Calu3 (cell line): ENCODE measurements at regions of chr6 and their contacts with region 1.

Region 1: DNA sequence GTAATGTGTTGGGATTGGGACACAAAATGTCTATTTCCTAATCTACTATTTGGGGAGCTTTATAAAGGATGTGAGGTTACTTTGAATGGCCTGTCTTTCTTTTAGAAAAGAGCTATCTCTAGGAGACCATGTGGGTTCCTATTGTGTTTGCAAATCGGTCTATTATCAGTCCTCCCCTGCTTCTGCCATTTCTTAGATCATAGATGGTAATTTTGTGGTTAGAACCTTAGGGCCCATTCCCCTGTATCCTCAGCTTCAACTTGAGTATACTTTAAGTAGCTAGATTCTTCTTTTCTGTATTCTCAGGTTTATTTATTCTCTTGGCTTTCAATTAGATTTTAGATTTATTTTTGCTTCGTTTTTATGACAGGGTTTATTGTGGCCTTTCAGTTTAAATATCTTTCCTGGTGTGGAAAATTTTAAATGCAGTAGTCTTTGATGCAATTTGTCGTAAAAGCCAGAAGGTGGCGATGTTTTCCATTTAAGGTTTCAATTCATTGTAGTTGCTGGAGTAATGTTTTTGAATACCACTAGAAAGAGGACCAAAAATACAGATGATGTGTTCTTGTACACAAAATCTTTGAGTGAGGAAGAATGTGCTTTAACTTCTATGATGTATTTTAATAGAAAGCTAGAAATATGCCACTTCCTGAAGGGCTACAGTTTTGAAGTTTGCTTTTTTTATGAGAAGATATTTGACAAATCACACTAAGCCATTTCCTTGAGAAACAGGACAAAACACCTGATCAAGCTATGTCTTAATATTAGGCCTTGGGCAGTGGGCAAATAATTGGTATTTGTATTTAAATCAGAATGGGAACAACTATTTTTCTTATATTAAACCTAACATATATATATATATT is 20.3 kb downstream of the TBPL1 start:
- DNase-seq: no peak
- H3K4me3 Mint-ChIP-seq: no peak overlapping the region
- H3K27ac Mint-ChIP-seq: peak overlapping the region; percentile 44
- H3K4me1 Mint-ChIP-seq: peaks cover 44% of the 10 kb centered on the region
- H3K27me3 Mint-ChIP-seq: no peaks in the 10 kb centered on the region
- CTCF ChIP-seq: peak; percentile 32

Region 2: DNA sequence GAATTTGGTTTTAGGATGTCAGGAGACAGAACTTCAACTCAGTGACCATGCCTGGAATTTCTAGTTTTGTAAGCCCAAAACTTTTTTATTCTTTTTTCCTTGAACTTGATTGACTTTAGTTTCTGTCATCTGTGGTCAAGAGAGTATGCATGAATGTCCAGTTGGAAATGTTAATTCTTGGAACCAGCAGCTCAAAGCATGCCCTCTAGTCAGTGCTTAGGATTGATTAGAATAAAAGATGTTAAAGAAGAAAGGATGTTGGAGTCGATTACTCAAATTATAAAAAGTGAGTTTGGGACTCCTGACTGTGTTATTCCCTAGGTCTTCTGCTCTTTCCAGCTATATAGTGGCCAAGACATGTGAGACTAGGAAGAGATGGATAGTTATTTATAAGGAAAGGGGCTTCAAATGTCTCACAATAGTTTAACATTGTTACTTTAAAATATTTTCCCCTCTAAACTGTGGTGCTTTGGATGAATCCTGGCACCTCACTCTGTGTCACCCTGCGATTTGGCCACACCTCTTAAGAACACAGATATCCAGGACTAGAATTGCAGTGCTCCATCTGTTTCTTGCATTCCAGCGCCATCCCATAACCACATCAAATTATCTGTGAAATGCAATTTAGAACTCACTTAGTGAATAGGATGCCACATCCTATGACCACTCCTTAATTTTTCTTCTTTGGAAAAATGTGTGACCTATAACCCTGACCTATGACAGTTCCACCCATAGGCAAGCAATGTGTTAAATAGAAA is 433.7 kb before region 1 on chr6:
- CTCF ChIA-PET with region 1: no interaction called
- intact Hi-C with region 1: no loop called
- DNase-seq: no peak
- H3K4me3 Mint-ChIP-seq: no peak overlapping the region
- H3K27ac Mint-ChIP-seq: no peak overlapping the region
- H3K4me1 Mint-ChIP-seq: peaks cover 21% of the 10 kb centered on the region
- H3K27me3 Mint-ChIP-seq: no peaks in the 10 kb centered on the region
- CTCF ChIP-seq: no peak

Region 3: DNA sequence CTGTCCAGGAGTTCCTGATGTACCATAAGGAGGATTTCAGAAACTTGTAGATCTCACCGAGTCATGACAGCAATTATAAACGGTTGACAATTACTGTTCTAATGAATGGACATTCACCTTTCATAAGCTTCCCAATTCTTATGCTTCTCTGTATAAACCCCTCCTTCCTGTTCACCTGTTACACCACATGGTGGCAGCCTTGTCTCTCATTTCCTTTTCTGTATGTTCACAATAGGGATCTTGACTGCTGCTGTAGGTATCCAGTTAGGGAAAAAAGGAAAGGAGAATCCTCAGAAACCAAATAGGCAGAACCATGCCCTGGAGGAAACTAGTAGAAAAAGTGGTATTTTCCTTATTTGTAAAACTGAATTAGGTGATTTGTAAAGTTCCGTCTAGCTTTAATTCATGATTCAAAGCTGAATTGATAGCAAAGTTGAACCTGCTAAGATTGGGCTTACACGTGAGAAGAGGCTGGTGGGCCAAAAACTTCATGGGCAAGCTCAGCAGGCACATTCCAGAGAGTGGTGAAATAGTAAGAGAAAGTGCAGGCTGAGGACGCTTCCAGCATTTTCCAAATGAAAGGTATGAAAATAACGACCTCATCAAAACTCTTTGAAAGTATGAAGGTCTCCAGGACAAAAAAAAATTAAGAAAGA is 49.3 kb before region 1 on chr6:
- CTCF ChIA-PET with region 1: no interaction called
- intact Hi-C with region 1: loop called (anchors 2 kb)
- DNase-seq: peak; percentile 70
- H3K4me3 Mint-ChIP-seq: no peak overlapping the region
- H3K27ac Mint-ChIP-seq: no peak overlapping the region
- H3K4me1 Mint-ChIP-seq: no peaks in the 10 kb centered on the region
- H3K27me3 Mint-ChIP-seq: no peaks in the 10 kb centered on the region
- CTCF ChIP-seq: peak; percentile 70

Region 4: DNA sequence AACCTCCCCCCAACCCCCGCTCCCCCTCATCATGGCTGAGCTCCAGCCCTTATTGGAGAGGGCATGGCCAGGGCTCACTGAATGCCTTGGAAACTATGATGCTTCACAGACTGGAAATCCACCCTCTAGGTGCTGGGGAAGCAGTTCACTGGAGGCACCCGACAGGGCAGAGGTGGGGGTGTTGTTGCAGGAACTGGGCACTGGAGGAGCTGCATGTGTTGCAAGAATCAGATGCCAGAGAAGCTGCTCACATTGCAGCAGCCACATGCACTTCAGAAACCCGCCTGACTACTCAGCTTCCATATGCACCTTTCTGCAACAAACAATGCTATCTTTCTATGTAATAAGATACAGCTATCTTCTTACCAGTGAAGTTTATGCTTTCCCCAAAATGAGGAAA is 28.2 kb before region 1 on chr6:
- CTCF ChIA-PET with region 1: no interaction called
- intact Hi-C with region 1: no loop called
- DNase-seq: no peak
- H3K4me3 Mint-ChIP-seq: no peak overlapping the region
- H3K27ac Mint-ChIP-seq: no peak overlapping the region
- H3K4me1 Mint-ChIP-seq: peaks cover 7% of the 10 kb centered on the region
- H3K27me3 Mint-ChIP-seq: no peaks in the 10 kb centered on the region
- CTCF ChIP-seq: no peak

Region 5: GRCh38 chr6:134015719-134016557 is 42.6 kb after region 1 on chr6:
- CTCF ChIA-PET with region 1: interaction called, 8 read pairs
- intact Hi-C with region 1: loop called (anchors 5 kb)
- DNase-seq: no peak
- H3K4me3 Mint-ChIP-seq: no peak overlapping the region
- H3K27ac Mint-ChIP-seq: no peak overlapping the region
- H3K4me1 Mint-ChIP-seq: peaks cover 44% of the 10 kb centered on the region
- H3K27me3 Mint-ChIP-seq: no peaks in the 10 kb centered on the region
- CTCF ChIP-seq: no peak

Region 6: GRCh38 chr6:134174672-134175198 is 201.4 kb after region 1 on chr6:
- CTCF ChIA-PET with region 1: no interaction called
- intact Hi-C with region 1: no loop called
- DNase-seq: peak; percentile 92
- H3K4me3 Mint-ChIP-seq: peak overlapping the region; percentile 88
- H3K27ac Mint-ChIP-seq: peak overlapping the region; percentile 84
- H3K4me1 Mint-ChIP-seq: peaks cover 44% of the 10 kb centered on the region
- H3K27me3 Mint-ChIP-seq: no peaks in the 10 kb centered on the region
- CTCF ChIP-seq: no peak